Activated naive CD4-positive, alpha-beta T cell treated with anti-CD3 and anti-CD28 coated beads for 36 hours (primary cell): ENCODE measurements at regions of chr6 and their contacts with region 1.

Region 1: DNA sequence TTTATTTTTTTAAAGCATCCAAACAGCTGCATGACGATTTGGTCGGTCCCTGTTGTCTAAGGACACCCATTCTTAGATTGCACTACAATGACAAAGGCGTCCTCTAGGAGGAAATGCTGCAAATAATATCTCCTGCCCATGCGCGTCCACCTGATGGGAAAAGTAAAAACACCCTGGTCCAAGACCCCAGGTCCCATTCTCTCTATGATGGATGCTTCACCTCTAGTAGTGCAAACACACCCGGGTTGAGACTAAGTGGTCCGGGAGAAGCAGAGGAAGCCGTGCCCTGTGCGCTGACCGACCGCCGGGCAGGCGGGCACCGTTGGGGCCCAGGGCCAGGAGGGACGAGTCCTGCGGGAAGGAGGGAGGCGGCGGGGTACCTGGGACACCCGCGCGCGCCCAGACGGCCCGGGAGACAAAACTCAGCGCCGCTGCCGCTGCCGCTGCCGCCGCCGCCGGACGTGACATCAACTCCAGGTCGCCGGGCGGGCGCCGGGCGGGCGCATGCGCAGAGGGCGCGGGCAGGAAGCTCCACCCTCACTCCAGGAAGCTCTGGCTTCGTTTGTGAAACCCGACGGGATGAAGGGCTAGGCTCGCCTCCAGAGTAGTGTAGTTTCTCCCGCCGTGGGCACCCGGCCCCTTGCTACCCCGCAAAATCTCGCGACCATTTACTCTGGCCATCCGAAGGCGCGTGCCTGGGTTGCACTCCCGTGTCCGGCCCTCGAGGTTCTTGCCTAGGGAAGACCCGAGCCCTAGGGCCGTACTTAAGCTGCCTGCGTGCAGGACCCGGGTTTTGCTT is at the start of gene TBC1D7:
- DNase-seq: peak; percentile 94
- H3K4me3 Mint-ChIP-seq: peak within 1 kb of the TSS; percentile 95
- H3K27ac Mint-ChIP-seq: peak within 1 kb of the TSS; percentile 93
- H3K4me1 Mint-ChIP-seq: peaks cover 18% of the 10 kb centered on the region
- H3K27me3 Mint-ChIP-seq: no peaks in the 10 kb centered on the region
- total RNA-seq, gene TBC1D7: 25.4 to 27.1 TPM

Region 2: DNA sequence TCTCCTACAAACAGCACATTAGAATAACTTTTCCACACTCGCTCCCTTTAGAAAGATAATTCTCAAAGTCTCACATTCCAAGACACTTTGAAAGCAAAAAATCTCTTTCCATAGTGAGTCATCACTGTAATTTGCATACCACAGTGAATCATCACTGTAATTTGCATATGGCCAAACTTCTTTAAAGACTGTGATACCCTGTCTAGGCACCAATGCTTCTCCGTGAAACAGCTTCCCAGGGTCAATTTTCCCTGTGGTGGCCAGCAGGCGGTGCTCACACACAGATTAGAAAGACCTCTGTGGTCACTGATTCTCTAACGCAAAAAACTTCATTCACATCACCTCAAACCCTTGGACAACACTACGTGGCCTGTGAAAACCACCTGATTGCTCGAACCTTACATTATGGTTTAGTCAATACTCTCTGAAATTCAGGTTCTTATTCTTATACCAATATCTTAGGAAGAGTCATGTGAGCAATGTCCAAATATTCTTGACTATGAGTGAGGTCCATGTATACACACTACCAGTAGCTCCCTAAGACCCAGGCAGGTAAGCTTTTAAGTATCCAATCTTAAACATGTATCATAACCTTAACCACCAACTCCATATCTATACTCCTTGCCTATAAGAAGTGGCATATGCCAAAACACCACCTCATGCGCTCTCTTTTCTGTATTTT is 690.2 kb before region 1 on chr6:
- CTCF ChIA-PET with region 1: interaction called, 3 read pairs
- intact Hi-C with region 1: loop called (anchors 1 kb)
- DNase-seq: peak; percentile 71
- H3K4me3 Mint-ChIP-seq: no peak overlapping the region
- H3K27ac Mint-ChIP-seq: no peak overlapping the region
- H3K4me1 Mint-ChIP-seq: peaks cover 4% of the 10 kb centered on the region
- H3K27me3 Mint-ChIP-seq: peaks cover 34% of the 10 kb centered on the region

Region 3: GRCh38 chr6:12679341-12679740 is 648.9 kb before region 1 on chr6:
- CTCF ChIA-PET with region 1: no interaction called
- intact Hi-C with region 1: no loop called
- DNase-seq: no peak
- H3K4me3 Mint-ChIP-seq: no peak overlapping the region
- H3K27ac Mint-ChIP-seq: no peak overlapping the region
- H3K4me1 Mint-ChIP-seq: no peaks in the 10 kb centered on the region
- H3K27me3 Mint-ChIP-seq: peaks cover 4% of the 10 kb centered on the region

Region 4: GRCh38 chr6:12911387-12911960 is 416.8 kb before region 1 on chr6:
- CTCF ChIA-PET with region 1: interaction called, 18 read pairs
- intact Hi-C with region 1: loop called (anchors 1 kb)
- DNase-seq: no peak
- H3K4me3 Mint-ChIP-seq: no peak overlapping the region
- H3K27ac Mint-ChIP-seq: no peak overlapping the region
- H3K4me1 Mint-ChIP-seq: no peaks in the 10 kb centered on the region
- H3K27me3 Mint-ChIP-seq: peaks cover 5% of the 10 kb centered on the region

Region 5: GRCh38 chr6:13194852-13195251 is 133.4 kb before region 1 on chr6:
- CTCF ChIA-PET with region 1: interaction called, 21 read pairs
- intact Hi-C with region 1: loop called (anchors 1 kb)
- DNase-seq: peak; percentile 49
- H3K4me3 Mint-ChIP-seq: no peak overlapping the region
- H3K27ac Mint-ChIP-seq: no peak overlapping the region
- H3K4me1 Mint-ChIP-seq: no peaks in the 10 kb centered on the region
- H3K27me3 Mint-ChIP-seq: peaks cover 9% of the 10 kb centered on the region

Region 6: DNA sequence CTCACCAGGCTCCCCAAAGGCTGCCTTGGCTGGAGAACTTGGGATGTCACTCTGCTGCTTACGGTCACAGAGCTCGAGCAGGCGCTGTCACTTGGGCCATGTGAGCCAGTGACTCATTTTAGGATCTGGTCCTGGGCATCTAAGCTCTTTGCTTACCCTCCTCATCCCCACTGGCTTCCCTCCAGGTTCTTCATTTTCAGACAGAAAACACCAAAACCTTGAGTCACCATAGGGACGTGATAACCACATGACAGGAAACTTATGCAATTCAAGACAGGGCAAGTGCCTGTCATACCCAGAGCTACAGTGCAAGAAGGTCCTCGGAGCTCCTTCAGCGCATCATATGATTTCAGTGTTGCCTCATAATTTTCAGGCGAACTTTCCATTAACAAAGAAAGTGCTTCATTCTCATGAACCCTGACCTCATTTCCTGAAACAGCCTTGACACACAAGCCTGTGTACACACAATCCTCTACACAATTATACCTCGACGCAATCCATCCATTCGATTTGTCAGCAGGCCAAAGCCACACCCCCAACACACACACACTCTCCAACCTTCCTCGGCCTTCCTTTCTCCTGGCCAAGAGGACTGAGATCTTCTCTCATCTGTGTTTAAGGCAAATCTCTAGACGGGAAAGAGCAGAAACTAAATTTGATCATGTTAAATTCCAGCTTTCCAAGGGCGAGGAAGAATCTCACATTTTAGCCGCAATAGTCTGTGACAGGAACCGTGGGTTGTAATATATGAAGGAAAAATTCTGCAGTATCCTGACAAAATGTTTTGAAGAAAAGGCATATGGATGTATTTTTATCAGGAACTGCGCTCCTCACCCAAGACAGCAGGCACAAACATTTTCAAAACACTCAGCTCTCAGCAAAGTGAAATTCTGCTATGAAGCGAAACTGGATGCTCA is 25.3 kb before region 1 on chr6:
- CTCF ChIA-PET with region 1: interaction called, 3 read pairs
- intact Hi-C with region 1: loop called (anchors 1 kb)
- DNase-seq: peak; percentile 79
- H3K4me3 Mint-ChIP-seq: peak overlapping the region; percentile 10
- H3K27ac Mint-ChIP-seq: peak overlapping the region; percentile 86
- H3K4me1 Mint-ChIP-seq: peaks cover 38% of the 10 kb centered on the region
- H3K27me3 Mint-ChIP-seq: no peaks in the 10 kb centered on the region

Region 7: DNA sequence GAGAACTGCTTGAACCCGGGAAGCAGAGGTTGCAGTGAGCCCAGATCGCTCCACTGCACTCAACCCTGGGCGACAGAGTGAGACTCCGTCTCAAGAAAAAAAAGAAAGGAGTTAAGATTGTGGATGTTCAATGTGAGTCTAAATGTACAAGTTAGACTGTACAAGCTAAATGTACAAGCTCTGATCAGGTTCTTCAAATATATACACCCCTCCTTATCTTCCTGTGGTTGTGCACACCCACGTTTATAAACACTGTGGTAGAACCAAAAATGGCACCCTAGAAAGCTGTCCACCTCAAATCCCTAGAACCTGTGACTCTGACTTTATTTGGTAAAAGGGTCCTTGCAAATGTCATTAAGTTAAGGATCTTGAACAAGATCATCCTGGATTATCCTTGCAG is 394.6 kb after region 1 on chr6:
- CTCF ChIA-PET with region 1: no interaction called
- intact Hi-C with region 1: no loop called
- DNase-seq: no peak
- H3K4me3 Mint-ChIP-seq: no peak overlapping the region
- H3K27ac Mint-ChIP-seq: no peak overlapping the region
- H3K4me1 Mint-ChIP-seq: peaks cover 27% of the 10 kb centered on the region
- H3K27me3 Mint-ChIP-seq: no peaks in the 10 kb centered on the region